Activated B cell treated with CpG ODN at 0.5 μM for 24 hours (primary cell): ENCODE measurements at regions of chr7 and their contacts with region 1.

Region 1: DNA sequence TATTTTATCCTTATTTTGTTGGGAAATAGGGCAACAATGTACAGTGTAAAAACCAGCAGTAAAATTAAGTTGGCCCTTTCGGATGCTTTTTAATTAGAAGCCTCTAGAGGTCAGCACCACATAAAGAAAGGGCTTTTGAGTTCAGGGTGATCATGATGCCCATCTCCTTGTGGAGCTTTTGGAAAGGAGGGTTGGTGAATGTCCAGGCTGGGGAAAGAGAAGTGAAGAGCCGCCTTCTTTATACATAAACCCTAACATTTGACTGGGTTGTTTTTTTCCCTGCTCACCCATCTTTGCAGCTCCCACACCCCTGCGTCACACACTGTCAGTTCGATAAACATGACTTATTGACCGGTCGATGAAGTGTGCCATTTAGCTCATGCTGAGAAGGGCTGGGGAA is 29.8 kb downstream of the MTURN start:
- DNase-seq: no peak
- ATAC-seq: peak; percentile 49
- H3K4me3 Mint-ChIP-seq: no peak overlapping the region
- H3K27ac Mint-ChIP-seq: peak overlapping the region; percentile 38
- H3K4me1 Mint-ChIP-seq: peaks cover 39% of the 10 kb centered on the region
- H3K27me3 Mint-ChIP-seq: no peaks in the 10 kb centered on the region
- CTCF ChIP-seq: no peak

Region 2: GRCh38 chr7:30134611-30135545 is 29.7 kb before region 1 on chr7 and contains the start of gene MTURN:
- CTCF ChIA-PET with region 1: interaction called, 3 read pairs
- POLR2A ChIA-PET with region 1: no interaction called
- intact Hi-C with region 1: loop called (anchors 2 kb)
- DNase-seq: peak; percentile 85
- ATAC-seq: peak; percentile 82
- H3K4me3 Mint-ChIP-seq: peak within 1 kb of the TSS; percentile 91
- H3K27ac Mint-ChIP-seq: peak within 1 kb of the TSS; percentile 77
- H3K4me1 Mint-ChIP-seq: peaks cover 12% of the 10 kb centered on the region
- H3K27me3 Mint-ChIP-seq: peaks cover 11% of the 10 kb centered on the region
- CTCF ChIP-seq: no peak
- total RNA-seq, gene MTURN: 2.8 and 4.6 TPM in 2 replicates

Region 3: GRCh38 chr7:30238721-30239441 is 74.3 kb after region 1 on chr7:
- CTCF ChIA-PET with region 1: interaction called, 11 read pairs
- POLR2A ChIA-PET with region 1: no interaction called
- intact Hi-C with region 1: loop called (anchors 1 kb)
- DNase-seq: no peak
- ATAC-seq: peak; percentile 69
- H3K4me3 Mint-ChIP-seq: peak overlapping the region; percentile 58
- H3K27ac Mint-ChIP-seq: peak overlapping the region; percentile 88
- H3K4me1 Mint-ChIP-seq: peaks cover 48% of the 10 kb centered on the region
- H3K27me3 Mint-ChIP-seq: no peaks in the 10 kb centered on the region
- CTCF ChIP-seq: no peak

Region 4: GRCh38 chr7:30412810-30413504 is 248.4 kb after region 1 on chr7:
- CTCF ChIA-PET with region 1: interaction called, 3 read pairs
- POLR2A ChIA-PET with region 1: no interaction called
- intact Hi-C with region 1: loop called (anchors 1 kb)
- DNase-seq: no peak
- ATAC-seq: peak; percentile 57
- H3K4me3 Mint-ChIP-seq: no peak overlapping the region
- H3K27ac Mint-ChIP-seq: no peak overlapping the region
- H3K4me1 Mint-ChIP-seq: peaks cover 33% of the 10 kb centered on the region
- H3K27me3 Mint-ChIP-seq: no peaks in the 10 kb centered on the region
- CTCF ChIP-seq: no peak

Region 5: GRCh38 chr7:30504347-30505173 is 340.0 kb after region 1 on chr7 and contains the start of gene GGCT:
- CTCF ChIA-PET with region 1: no interaction called
- POLR2A ChIA-PET with region 1: no interaction called
- intact Hi-C with region 1: loop called (anchors 2 kb)
- DNase-seq: peak; percentile 87
- ATAC-seq: peak; percentile 98
- H3K4me3 Mint-ChIP-seq: peak within 1 kb of the TSS; percentile 91
- H3K27ac Mint-ChIP-seq: peak within 1 kb of the TSS; percentile 97
- H3K4me1 Mint-ChIP-seq: peaks cover 39% of the 10 kb centered on the region
- H3K27me3 Mint-ChIP-seq: no peaks in the 10 kb centered on the region
- CTCF ChIP-seq: no peak
- total RNA-seq, gene GGCT: 22.7 and 24.4 TPM in 2 replicates